PC-9 (cell line): ENCODE measurements at regions of chr21 and their contacts with region 1.

Region 1: DNA sequence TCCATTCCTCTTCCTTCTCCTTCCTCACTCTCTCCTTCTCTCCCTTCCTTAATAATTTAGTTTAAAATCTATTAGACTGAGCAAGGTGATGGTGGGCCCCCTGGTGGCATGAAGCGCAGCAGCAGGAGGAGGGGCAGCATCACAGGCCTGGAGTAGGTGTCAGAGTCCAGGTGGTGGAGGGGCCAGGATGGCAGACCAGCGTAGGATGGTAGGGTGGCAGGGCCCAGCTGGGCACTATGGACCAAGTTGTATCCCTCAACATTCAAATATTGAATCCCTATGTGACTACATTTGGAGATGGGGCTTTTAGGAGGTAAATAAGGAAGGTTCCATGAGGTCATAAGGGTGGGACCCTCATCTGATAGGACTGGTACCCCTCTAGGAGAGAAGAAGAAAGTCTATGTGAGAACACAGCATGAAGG is 61.0 kb downstream of the WDR4 start:
- DNase-seq: peak in 1 of 2 experiments; percentile 53
- H3K4me3 ChIP-seq: no peak overlapping the region
- H3K27ac ChIP-seq: no peak overlapping the region
- H3K4me1 ChIP-seq: 0 out of 2 replicates have a peak, but pooled peaks cover 7% of the 10 kb centered on the region
- H3K27me3 ChIP-seq: no peaks in the 10 kb centered on the region
- CTCF ChIP-seq: peak; percentile 87

Region 2: DNA sequence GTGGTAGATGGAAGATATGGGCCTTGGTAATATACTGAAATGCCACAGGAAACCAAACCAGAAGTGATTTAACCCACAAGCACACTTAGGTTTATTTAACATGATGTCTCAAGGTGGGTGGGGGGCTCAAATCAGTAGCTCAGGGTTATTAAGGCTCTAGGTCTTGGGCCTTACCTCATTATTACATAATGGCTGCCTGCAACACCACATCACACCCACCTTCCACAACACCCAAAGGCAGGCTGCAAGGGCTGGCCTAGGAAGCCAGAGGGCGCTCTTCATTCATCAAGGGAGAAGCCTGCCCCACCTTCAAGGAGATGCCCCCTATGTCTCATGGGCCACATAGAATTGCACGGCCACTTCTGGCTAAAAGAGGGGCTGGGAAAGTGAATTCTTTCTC is 458.0 kb before region 1 on chr21:
- CTCF ChIA-PET with region 1: no interaction called
- POLR2A ChIA-PET with region 1: no interaction called
- intact Hi-C with region 1: no loop called
- DNase-seq: no peak
- H3K4me3 ChIP-seq: no peak overlapping the region
- H3K27ac ChIP-seq: no peak overlapping the region
- H3K4me1 ChIP-seq: peaks cover 19% of the 10 kb centered on the region
- H3K27me3 ChIP-seq: no peaks in the 10 kb centered on the region
- CTCF ChIP-seq: peak; percentile 44; the same call in 1 of the 2 replicates

Region 3: GRCh38 chr21:42593007-42593806 is 225.1 kb before region 1 on chr21:
- CTCF ChIA-PET with region 1: no interaction called
- POLR2A ChIA-PET with region 1: no interaction called
- intact Hi-C with region 1: loop called (anchors 2 kb)
- DNase-seq: peak in 1 of 2 experiments; percentile 65
- H3K4me3 ChIP-seq: no peak overlapping the region; the same call in 1 of the 2 replicates
- H3K27ac ChIP-seq: no peak overlapping the region
- H3K4me1 ChIP-seq: no peaks in the 10 kb centered on the region
- H3K27me3 ChIP-seq: no peaks in the 10 kb centered on the region
- CTCF ChIP-seq: peak; percentile 74

Region 4: DNA sequence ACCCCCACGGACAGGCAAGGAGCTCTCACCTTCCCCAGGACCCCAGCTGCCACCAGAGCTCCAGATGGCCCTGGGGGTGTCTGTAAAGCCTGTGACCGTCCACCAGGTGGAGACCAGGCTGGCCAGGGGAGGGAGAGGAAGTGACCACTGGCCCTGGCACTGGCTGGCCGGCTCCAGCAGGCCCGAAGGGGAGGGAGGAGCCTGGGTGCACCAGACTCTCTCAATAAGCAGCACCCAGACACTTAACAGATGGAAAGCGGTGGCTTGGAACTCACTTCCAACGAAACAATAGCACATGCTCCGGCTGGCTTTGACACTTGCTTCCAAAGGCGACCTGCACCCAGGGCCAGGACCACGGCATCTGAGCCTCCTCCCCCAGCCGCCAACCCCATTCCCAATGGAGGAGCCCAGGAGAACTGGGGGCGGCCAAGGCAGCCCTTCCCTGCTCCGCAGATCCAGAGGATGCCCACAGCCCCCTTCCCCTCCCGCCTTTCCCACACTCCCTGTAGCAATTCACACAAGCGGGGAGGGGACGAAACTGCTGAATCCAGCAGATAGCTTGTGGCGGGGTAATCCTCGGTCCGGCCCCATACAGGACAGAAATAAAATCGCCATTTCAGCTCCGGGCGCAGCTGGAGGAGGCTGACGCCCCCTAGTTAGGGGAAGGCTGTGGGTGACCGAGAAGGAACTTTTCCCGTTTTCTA is 165.7 kb before region 1 on chr21:
- CTCF ChIA-PET with region 1: no interaction called
- POLR2A ChIA-PET with region 1: no interaction called
- intact Hi-C with region 1: loop called (anchors 1 kb)
- DNase-seq: peak; percentile 50 to 72
- H3K4me3 ChIP-seq: no peak overlapping the region
- H3K27ac ChIP-seq: no peak overlapping the region
- H3K4me1 ChIP-seq: peaks cover 24% of the 10 kb centered on the region
- H3K27me3 ChIP-seq: no peaks in the 10 kb centered on the region
- CTCF ChIP-seq: peak; percentile 68; the same call in 1 of the 2 replicates

Region 5: GRCh38 chr21:42850866-42851391 is 32.6 kb after region 1 on chr21:
- CTCF ChIA-PET with region 1: no interaction called
- POLR2A ChIA-PET with region 1: no interaction called
- intact Hi-C with region 1: no loop called
- DNase-seq: no peak
- H3K4me3 ChIP-seq: no peak overlapping the region
- H3K27ac ChIP-seq: no peak overlapping the region
- H3K4me1 ChIP-seq: no peaks in the 10 kb centered on the region
- H3K27me3 ChIP-seq: no peaks in the 10 kb centered on the region
- CTCF ChIP-seq: peak; percentile 46

Region 6: GRCh38 chr21:42913476-42913875 is 95.1 kb after region 1 on chr21:
- CTCF ChIA-PET with region 1: interaction called, 15 read pairs
- POLR2A ChIA-PET with region 1: no interaction called
- intact Hi-C with region 1: no loop called
- DNase-seq: no peak
- H3K4me3 ChIP-seq: no peak overlapping the region
- H3K27ac ChIP-seq: no peak overlapping the region
- H3K4me1 ChIP-seq: no peaks in the 10 kb centered on the region
- H3K27me3 ChIP-seq: no peaks in the 10 kb centered on the region
- CTCF ChIP-seq: no peak